Naive thymus-derived CD8-positive, alpha-beta T cell (primary cell): ENCODE measurements at regions of chr4 and their contacts with region 1.

Region 1: DNA sequence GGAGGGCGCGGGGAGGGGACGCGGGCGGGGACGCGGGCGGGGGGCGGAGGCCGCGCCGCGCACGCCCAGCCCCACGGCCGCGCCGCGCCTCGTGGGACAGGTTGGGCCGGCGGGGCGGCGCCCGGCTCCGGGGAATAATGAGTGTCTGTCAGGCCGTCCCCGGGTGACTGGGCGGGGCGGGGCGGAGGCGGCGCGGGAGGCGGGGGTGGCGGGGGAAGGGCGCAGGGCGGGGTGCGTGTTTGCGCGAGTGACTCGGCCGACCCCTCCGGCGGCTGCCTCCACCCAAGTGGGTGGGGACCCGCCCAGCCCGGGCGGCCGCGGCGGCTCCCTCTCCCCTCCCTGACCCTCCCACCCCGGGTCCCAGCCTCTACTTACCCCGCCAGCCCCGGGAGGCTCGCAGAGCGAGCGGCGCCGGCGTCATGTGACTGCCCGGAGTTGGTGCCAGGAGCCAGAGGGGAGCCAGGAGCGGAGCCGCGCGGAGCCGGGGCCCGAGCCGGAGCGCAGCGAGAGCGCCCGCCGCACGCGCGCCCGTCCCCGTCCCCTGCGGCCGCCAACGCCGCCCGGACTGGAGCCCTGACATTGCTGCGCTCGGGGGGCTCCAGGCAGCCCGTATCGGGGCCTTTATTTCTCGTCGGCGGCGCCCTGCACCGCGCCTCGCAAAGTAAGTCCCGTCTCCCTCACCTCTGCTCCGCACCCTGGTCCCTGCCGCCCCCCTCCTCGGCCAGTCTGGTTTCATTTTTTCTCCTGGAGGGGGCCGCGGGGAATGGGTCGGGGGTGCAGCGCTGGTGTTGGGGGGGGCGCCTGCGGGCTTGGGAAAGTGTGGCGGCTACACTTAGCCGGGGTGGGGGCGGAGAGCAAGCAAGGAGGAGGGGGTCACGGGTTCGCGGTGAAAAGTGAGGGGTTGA is at the start of gene KLF3:
- DNase-seq: peak; percentile 83 to 97 (median 92)
- ATAC-seq: peak; percentile 70
- H3K4me3 Mint-ChIP-seq: peak within 1 kb of the TSS; percentile 90 to 99 (median 97)
- H3K27ac Mint-ChIP-seq: peak within 1 kb of the TSS; percentile 92 to 100 (median 98)
- H3K4me1 Mint-ChIP-seq: peaks cover 30 to 74% (median 60%) of the 10 kb centered on the region in 4 donors
- H3K27me3 Mint-ChIP-seq: no peaks in the 10 kb centered on the region
- polyA plus RNA-seq, gene KLF3: 46.2 to 56.6 (median 50.8) TPM

Region 2: GRCh38 chr4:38319456-38320342 is 344.4 kb before region 1 on chr4:
- POLR2A ChIA-PET with region 1: interaction called, 49 read pairs
- DNase-seq: peak; percentile 72 to 95 (median 86)
- ATAC-seq: peak; percentile 69 to 76
- H3K4me3 Mint-ChIP-seq: peak overlapping the region; percentile 72 to 92 (median 86)
- H3K27ac Mint-ChIP-seq: peak overlapping the region; percentile 82 to 98 (median 94)
- H3K4me1 Mint-ChIP-seq: peaks cover 29 to 67% (median 54%) of the 10 kb centered on the region in 4 donors
- H3K27me3 Mint-ChIP-seq: no peaks in the 10 kb centered on the region

Region 3: DNA sequence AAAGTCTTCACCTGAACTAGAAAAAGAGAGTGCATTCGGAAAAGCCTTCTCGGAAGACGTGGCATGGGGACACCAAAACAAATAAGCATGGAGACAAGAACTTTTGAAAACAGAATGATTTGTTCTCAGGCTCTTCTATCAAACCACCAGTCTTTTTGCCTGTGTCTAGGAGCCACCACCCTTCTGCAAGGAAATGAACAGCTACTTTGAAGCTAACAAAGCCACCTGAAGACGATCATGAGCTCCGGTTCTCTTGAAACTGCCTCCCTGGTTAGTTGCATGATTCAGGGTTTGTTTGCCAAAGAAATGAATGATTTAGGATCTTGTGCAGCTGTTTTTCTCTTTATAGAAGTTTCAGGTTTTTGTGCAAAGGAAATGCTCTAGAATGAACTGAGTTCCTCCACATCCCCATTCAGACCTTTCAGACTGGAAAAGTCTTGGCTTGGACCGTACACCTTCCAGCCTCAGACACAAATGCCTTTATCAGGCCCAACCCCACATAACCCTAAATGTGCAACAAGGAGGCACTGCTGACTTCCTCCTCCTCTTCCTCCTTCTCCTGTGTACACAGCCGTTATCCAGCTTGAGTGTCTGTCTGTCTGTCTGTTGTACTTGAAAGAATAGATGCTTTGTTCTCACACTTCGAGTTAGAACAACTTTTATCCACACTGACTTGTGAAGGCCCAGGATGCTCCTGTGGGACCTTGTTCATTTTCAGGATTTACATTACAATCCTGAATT is 334.9 kb before region 1 on chr4:
- POLR2A ChIA-PET with region 1: interaction called, 12 read pairs
- DNase-seq: peak in 5 of 10 donors; percentile 15 to 77 (median 51)
- ATAC-seq: peak; percentile 88 to 90
- H3K4me3 Mint-ChIP-seq: peak overlapping the region; percentile 30 to 87 (median 66)
- H3K27ac Mint-ChIP-seq: peak overlapping the region; percentile 88 to 96 (median 92)
- H3K4me1 Mint-ChIP-seq: peaks cover 40 to 80% (median 63%) of the 10 kb centered on the region in 4 donors
- H3K27me3 Mint-ChIP-seq: no peaks in the 10 kb centered on the region

Region 4: GRCh38 chr4:38509551-38509950 is 154.5 kb before region 1 on chr4:
- POLR2A ChIA-PET with region 1: interaction called, 33 read pairs
- DNase-seq: peak in 9 of 10 donors; percentile 23 to 84 (median 61)
- ATAC-seq: peak; percentile 93 to 94
- H3K4me3 Mint-ChIP-seq: peak overlapping the region; percentile 74 to 94 (median 84)
- H3K27ac Mint-ChIP-seq: peak overlapping the region; percentile 83 to 96 (median 93)
- H3K4me1 Mint-ChIP-seq: peaks cover 63 to 94% (median 83%) of the 10 kb centered on the region in 4 donors
- H3K27me3 Mint-ChIP-seq: no peaks in the 10 kb centered on the region

Region 5: DNA sequence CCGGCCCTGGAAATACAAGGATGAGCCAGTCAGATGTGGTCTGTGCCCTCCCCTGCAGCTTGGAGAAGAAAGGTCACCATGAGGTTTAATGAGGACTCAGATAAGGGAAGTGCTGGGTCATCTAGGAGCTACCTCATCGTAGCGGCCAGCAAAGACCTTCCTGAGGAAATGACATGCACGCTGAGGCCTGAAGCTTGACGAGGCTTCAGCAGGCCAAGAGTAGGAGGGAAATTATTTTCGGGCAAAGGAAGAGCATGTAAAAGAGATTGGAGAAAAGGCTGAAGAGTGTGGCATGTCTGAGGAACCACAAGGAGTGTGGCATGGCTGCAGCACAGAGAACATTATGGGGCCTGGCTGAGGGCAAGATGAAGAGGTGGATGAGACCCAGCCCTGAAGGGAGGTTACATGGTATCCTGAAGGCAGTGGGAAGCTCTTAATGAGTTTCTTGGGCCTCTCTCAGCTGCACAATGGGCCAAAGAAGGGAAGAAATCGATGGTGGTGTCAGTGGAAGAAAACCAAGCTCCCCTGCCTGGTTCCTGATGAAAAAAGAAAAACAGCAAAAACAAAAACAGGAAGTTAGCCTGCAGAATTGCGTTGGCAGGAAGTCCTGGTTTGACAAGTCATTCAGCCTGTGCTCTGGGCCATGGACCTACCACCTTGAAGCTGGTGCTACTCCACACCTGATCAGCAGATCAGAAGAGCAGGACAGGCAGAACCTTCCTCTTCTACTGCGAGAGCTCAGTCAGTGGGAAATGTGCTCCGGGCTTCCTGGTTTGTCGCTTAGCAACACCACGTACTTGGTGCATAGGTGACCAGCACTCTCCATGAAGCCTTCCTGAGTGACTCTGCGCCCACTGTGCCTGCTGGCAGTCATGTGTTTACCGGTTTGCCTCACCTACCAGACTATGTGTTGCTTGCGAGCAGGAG is 134.6 kb before region 1 on chr4:
- POLR2A ChIA-PET with region 1: interaction called, 18 read pairs
- DNase-seq: peak in 7 of 10 donors; percentile 21 to 65 (median 48)
- ATAC-seq: peak; percentile 91 to 93
- H3K4me3 Mint-ChIP-seq: peak overlapping the region in 9 of 10 donors; percentile 30 to 81 (median 61)
- H3K27ac Mint-ChIP-seq: peak overlapping the region; percentile 79 to 94 (median 88)
- H3K4me1 Mint-ChIP-seq: peaks cover 14 to 37% (median 22%) of the 10 kb centered on the region in 4 donors
- H3K27me3 Mint-ChIP-seq: no peaks in the 10 kb centered on the region

Region 6: GRCh38 chr4:38675146-38676121 is 11.4 kb after region 1 on chr4:
- POLR2A ChIA-PET with region 1: interaction called, 181 read pairs
- DNase-seq: peak; percentile 66 to 89 (median 82)
- ATAC-seq: peak; percentile 50 to 57
- H3K4me3 Mint-ChIP-seq: peak overlapping the region; percentile 20 to 91 (median 82)
- H3K27ac Mint-ChIP-seq: peak overlapping the region; percentile 89 to 99 (median 94)
- H3K4me1 Mint-ChIP-seq: peaks cover 68 to 94% (median 89%) of the 10 kb centered on the region in 4 donors
- H3K27me3 Mint-ChIP-seq: no peaks in the 10 kb centered on the region